ENCODE measurements at regions of chr20 and their contacts with region 1.

Region 1: GRCh38 chr20:63698739-63699465 is 2.5 kb downstream of the TNFRSF6B start:
- DNase-seq: no peak
- ATAC-seq: peak; percentile 31
- H3K4me3 Mint-ChIP-seq: no peak overlapping the region
- H3K27ac Mint-ChIP-seq: no peak overlapping the region
- H3K4me1 Mint-ChIP-seq: peaks cover 20% of the 10 kb centered on the region
- H3K27me3 Mint-ChIP-seq: no peaks in the 10 kb centered on the region
- CTCF ChIP-seq: no peak

Region 2: GRCh38 chr20:63739130-63740069 is 40.5 kb after region 1 on chr20 and contains the start of gene SLC2A4RG:
- CTCF ChIA-PET with region 1: no interaction called
- POLR2A ChIA-PET with region 1: interaction called, 4 read pairs
- intact Hi-C with region 1: loop called (anchors 5 kb)
- DNase-seq: peak; percentile 73
- ATAC-seq: peak; percentile 65
- H3K4me3 Mint-ChIP-seq: peak within 1 kb of the TSS; percentile 48
- H3K27ac Mint-ChIP-seq: no peak within 1 kb of the TSS
- H3K4me1 Mint-ChIP-seq: peaks cover 28% of the 10 kb centered on the region
- H3K27me3 Mint-ChIP-seq: no peaks in the 10 kb centered on the region
- CTCF ChIP-seq: no peak
- total RNA-seq, gene SLC2A4RG: 20.9 and 28.1 TPM in 2 replicates

Region 3: GRCh38 chr20:63894358-63895201 is 195.7 kb after region 1 on chr20 and contains the start of gene DNAJC5:
- CTCF ChIA-PET with region 1: no interaction called
- POLR2A ChIA-PET with region 1: no interaction called
- intact Hi-C with region 1: no loop called
- DNase-seq: peak; percentile 97
- ATAC-seq: peak; percentile 92
- H3K4me3 Mint-ChIP-seq: peak within 1 kb of the TSS; percentile 88
- H3K27ac Mint-ChIP-seq: peak within 1 kb of the TSS; percentile 90
- H3K4me1 Mint-ChIP-seq: peaks cover 45% of the 10 kb centered on the region
- H3K27me3 Mint-ChIP-seq: no peaks in the 10 kb centered on the region
- CTCF ChIP-seq: no peak
- total RNA-seq, gene DNAJC5: 27.5 and 28.6 TPM in 2 replicates

Region 4: DNA sequence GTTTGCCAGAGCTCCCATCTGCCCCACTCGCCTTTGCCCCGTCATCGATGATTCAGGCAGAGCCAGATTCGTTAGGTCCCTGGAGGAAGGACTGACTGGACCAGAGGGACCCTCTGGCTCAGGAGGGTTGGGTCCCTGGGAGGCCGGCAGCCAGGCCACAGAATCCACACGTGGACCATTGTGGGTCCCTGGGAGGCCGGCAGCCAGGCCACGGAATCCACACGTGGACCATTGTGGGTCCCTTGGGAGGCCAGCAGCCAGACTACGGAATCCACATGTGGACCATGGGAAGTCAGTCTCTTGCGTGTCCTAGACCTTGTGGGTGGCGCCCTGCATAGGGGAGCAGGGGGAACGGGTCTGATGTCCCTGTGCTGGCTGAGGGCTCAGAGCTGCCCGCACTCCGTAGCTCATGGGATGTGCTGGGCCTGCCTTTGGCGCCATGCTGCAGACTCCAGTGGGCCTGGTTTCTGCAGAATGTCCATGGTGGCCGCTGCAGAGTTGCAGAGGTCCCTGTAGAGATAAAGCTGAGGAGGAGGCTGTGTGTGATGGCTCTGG is 233.8 kb after region 1 on chr20:
- CTCF ChIA-PET with region 1: no interaction called
- POLR2A ChIA-PET with region 1: interaction called, 11 read pairs
- intact Hi-C with region 1: no loop called
- DNase-seq: no peak
- ATAC-seq: no peak
- H3K4me3 Mint-ChIP-seq: no peak overlapping the region
- H3K27ac Mint-ChIP-seq: no peak overlapping the region
- H3K4me1 Mint-ChIP-seq: no peaks in the 10 kb centered on the region
- H3K27me3 Mint-ChIP-seq: no peaks in the 10 kb centered on the region
- CTCF ChIP-seq: no peak

Region 5: GRCh38 chr20:63980806-63981728 is 282.2 kb after region 1 on chr20 and contains the start of gene PRPF6:
- CTCF ChIA-PET with region 1: no interaction called
- POLR2A ChIA-PET with region 1: no interaction called
- intact Hi-C with region 1: no loop called
- DNase-seq: peak; percentile 90
- ATAC-seq: peak; percentile 65
- H3K4me3 Mint-ChIP-seq: peak within 1 kb of the TSS; percentile 92
- H3K27ac Mint-ChIP-seq: peak within 1 kb of the TSS; percentile 94
- H3K4me1 Mint-ChIP-seq: peaks cover 50% of the 10 kb centered on the region
- H3K27me3 Mint-ChIP-seq: no peaks in the 10 kb centered on the region
- CTCF ChIP-seq: peak; percentile 25
- total RNA-seq, gene PRPF6: 75.7 and 75.8 TPM in 2 replicates